ENCODE measurements at regions of chr14 and their contacts with region 1.

Region 1: GRCh38 chr14:53432378-53432802 is 279.3 kb upstream of the DDHD1 start:
- DNase-seq: no peak
- H3K4me3 ChIP-seq: no peak overlapping the region
- H3K27me3 ChIP-seq: no peaks in the 10 kb centered on the region
- CTCF ChIP-seq: peak; percentile 73

Region 2: DNA sequence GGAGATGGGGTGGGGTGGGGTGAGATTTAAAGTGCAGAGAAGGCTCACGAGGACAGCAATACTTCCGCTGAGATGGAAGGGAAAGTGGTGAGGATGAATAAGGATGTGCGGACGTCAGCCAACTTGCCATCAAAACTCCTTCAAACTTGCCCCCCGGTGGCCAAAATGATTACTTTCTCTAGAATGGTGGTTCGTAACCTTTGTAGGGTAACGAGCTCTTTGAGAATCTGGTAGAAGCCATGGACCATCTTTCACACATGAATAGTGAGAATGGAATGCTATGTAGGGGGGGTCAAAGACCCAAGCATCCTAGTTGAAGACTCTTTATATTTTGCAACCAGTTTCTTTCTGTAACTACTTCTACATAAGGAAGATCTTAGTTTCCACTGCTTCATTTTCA is 33.3 kb before region 1 on chr14:
- CTCF ChIA-PET with region 1: no interaction called
- POLR2A ChIA-PET with region 1: no interaction called
- DNase-seq: no peak
- H3K4me3 ChIP-seq: no peak overlapping the region
- H3K27me3 ChIP-seq: no peaks in the 10 kb centered on the region; the same call in 1 of the 2 replicates
- CTCF ChIP-seq: peak; percentile 40

Region 3: DNA sequence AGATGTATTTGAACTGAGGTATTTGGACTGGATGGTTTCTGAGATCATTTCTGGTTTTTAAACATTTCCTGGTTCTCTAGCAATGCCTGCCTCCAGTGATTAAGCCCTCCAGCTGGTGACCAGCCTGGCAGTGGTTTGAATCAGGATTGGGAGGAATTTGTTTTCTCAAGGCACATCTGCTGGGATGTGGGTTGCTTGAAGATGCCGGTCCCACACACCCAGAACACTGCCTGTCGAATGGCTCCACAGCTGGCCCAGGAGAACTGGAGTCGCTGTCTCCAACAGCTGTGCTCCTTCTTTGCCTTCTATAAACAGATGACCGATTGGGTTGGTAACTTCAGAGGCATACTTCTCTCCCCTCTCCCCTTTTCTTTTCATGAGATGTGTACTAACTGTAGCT is 21.3 kb before region 1 on chr14:
- CTCF ChIA-PET with region 1: interaction called, 10 read pairs
- POLR2A ChIA-PET with region 1: no interaction called
- DNase-seq: no peak
- H3K4me3 ChIP-seq: no peak overlapping the region
- H3K27me3 ChIP-seq: peaks cover 3% of the 10 kb centered on the region; the same call in 1 of the 2 replicates
- CTCF ChIP-seq: no peak

Region 4: DNA sequence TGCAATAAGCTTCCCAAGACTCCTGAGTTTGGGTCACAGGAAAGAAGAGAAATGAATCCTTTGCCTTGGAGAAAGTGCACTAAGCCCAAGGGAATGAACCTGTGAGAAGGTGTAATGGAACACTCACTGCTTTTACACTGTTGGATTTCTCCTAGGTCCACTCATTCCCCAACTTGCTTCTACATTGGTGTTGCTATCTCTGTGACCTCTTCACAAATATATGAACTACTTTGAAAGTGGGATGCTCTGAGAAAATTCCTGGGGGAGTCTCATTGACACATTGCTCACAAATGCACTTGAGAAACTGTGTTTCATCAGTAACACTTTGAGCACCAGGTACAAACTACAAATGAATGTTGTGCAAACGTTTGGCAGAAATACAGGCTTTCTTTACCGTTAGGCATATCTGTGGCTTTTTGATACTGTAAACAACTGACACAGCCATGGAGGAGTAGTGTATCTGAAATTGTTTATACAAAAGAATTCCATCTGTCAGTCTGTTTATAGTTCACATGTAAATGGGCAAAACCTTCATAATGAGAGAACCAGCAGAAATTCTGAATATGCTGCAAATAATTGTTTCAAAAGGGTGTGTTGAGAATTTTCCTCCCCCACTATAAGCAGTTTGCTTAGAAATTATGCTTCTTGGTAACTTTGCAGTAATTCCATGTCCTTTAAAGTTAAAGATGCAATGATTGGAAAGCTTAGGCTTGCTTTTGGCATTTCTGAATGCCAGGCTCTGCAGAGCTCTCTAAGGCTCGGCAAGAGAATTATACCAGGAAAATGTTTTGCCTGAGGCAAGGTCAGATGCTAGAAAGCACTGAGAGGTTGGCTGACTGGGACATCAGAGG is 69.2 kb after region 1 on chr14:
- CTCF ChIA-PET with region 1: no interaction called
- POLR2A ChIA-PET with region 1: no interaction called
- DNase-seq: no peak
- H3K4me3 ChIP-seq: no peak overlapping the region
- H3K27me3 ChIP-seq: no peaks in the 10 kb centered on the region
- CTCF ChIP-seq: no peak

Region 5: GRCh38 chr14:53547593-53547992 is 115.2 kb after region 1 on chr14:
- CTCF ChIA-PET with region 1: no interaction called
- POLR2A ChIA-PET with region 1: no interaction called
- DNase-seq: no peak
- H3K4me3 ChIP-seq: no peak overlapping the region
- H3K27me3 ChIP-seq: peaks cover 1% of the 10 kb centered on the region; the same call in 1 of the 2 replicates
- CTCF ChIP-seq: no peak

Measured in BJ (cell line).